Activated T-helper 1 cell treated with anti-CD3 and anti-CD28 coated beads, Interleukin-12 subunit alpha, Interleukin-12 subunit beta, Interleukin-2, Interleukin-4 antibody, amounts not matched to agents 30 ng/mL and 10 ng/mL and 1 ng/mL, durations not matched to agents 14 hours and 24 hours and 36 hours (primary cell): ENCODE measurements at regions of chr12 and their contacts with region 1.

Region 1: DNA sequence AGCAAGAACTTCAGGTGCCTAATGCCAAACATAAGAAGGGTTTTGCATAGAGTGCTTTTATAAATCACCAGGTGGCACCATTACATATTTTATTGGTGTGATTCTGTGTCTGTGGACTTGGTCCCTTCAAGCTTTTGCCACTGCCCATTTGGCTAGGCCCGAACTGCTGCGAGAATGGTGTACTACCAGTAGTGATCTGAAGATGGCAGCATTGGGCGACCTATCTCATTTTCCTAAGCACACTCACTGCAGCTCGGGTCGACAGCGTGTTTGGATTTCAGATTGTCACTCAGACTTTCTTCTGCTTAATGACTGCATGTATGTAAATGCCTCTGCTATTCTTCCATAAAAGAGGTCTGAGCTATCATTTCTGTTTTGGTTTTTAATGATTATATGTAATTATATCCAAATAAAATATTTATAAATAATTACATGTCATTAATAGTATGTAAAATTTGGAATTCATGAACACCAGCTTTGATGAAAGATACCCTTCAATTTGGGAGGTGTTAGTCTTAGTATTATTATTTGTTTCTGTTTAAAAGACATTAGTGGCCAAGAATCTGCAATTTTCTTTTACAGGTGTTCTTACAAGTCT is 78.5 kb downstream of the TPH2 start:
- DNase-seq: peak; percentile 45
- H3K4me3 Mint-ChIP-seq: no peak overlapping the region
- H3K27ac Mint-ChIP-seq: no peak overlapping the region
- H3K4me1 Mint-ChIP-seq: no peaks in the 10 kb centered on the region
- H3K27me3 Mint-ChIP-seq: peaks cover 12% of the 10 kb centered on the region

Region 2: GRCh38 chr12:72264548-72265175 is 247.5 kb after region 1 on chr12:
- intact Hi-C with region 1: loop called (anchors 2 kb)
- DNase-seq: no peak
- H3K4me3 Mint-ChIP-seq: no peak overlapping the region
- H3K27ac Mint-ChIP-seq: no peak overlapping the region
- H3K4me1 Mint-ChIP-seq: no peaks in the 10 kb centered on the region
- H3K27me3 Mint-ChIP-seq: no peaks in the 10 kb centered on the region